Mammary epithelial cell (primary cell): ENCODE measurements at regions of chr17 and their contacts with region 1.

Region 1: DNA sequence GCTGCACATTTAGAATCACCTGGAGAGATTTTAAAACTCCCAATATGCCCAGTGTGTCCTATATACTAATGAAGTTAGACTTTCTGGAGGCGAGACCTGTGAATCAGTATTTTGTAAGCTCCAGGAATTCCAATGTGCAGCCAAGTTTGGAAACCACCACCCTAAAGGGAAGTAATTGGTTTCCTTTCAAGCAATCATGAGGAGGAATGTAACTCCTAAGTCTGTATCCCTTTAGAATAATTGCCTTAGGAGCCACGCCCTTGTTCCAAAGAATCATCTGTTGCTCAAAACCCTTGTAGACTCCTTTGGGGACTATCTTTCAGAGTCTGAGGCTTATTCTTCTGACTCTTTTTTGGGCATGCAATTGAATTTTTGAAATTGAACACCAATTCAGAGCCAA is 84.4 kb downstream of the DNAH9 start:
- DNase-seq: no peak
- H3K4me3 ChIP-seq: no peak overlapping the region
- H3K27ac ChIP-seq: no peak overlapping the region
- H3K4me1 ChIP-seq: no peaks in the 10 kb centered on the region
- H3K27me3 ChIP-seq: no peaks in the 10 kb centered on the region
- CTCF ChIP-seq: no peak

Region 2: DNA sequence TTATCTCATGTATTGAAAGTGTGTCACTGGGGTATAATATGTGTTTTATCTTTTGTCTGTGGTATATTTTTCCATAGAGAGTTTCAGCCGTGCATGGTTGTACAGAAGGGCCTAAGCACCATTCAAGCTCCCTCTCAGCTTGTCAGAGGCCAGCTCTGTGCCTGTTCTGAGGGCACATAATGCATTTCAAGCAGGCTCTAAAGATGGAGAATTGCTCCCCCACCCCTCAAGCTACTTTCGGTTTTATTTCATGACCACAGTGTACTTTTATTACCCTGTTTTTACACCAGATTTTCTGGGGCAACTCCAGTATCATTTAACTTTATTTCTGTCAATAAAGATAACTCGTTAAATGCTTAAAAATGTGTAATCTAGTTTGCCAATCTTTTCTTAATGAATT is 310.0 kb before region 1 on chr17:
- CTCF ChIA-PET with region 1: no interaction called
- dilution Hi-C with region 1: no loop called
- in situ Hi-C with region 1: no loop called
- intact Hi-C with region 1: no loop called
- DNase-seq: no peak
- H3K4me3 ChIP-seq: no peak overlapping the region
- H3K27ac ChIP-seq: no peak overlapping the region
- H3K4me1 ChIP-seq: no peaks in the 10 kb centered on the region
- H3K27me3 ChIP-seq: no peaks in the 10 kb centered on the region
- CTCF ChIP-seq: no peak

Region 3: DNA sequence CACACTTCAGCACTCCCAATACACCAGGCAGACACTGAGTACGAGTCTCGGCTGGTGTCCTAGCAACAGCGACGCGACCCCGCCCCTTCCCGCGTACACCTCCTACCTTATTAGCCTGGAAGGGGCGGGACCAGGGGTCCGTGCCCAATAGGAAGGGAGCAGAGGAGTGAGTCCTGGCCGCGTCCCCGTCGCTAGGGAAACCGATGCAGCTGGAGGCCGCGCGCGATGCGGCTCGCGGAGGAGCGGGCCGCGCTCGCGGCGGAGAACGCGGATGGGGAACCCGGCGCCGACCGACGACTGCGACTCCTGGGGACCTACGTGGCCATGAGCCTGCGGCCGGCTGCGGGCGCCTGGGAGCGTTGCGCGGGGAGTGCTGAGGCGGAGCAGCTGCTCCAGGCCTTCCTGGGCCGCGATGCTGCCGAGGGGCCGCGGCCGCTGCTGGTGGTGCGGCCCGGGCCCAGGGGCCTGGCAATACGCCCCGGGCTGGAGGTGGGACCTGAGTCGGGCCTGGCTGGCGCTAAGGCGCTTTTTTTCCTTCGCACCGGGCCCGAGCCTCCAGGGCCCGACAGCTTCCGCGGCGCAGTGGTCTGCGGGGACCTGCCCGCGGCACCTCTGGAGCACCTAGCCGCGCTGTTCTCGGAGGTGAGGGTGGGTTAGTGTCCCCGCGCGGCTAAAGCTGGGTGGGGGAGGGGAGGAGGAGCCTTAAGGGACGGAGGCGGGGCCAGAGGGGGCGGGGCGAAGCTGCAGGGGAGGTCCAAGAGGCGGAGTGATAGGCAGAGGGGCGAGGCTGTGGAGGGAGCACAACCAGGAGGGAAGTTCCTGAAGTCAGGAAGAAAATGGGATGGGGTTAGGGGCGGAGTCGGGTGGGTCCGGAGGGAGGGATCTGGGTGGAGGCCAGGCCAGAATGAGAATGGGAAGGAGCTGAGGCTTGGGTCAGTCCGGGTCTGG is 84.1 kb before region 1 on chr17 and contains the start of gene DNAH9:
- CTCF ChIA-PET with region 1: no interaction called
- dilution Hi-C with region 1: no loop called
- in situ Hi-C with region 1: loop called in 1 of 2 experiments (anchors 25 kb)
- intact Hi-C with region 1: no loop called
- DNase-seq: peak; percentile 17
- H3K4me3 ChIP-seq: no peak within 1 kb of the TSS
- H3K27ac ChIP-seq: no peak within 1 kb of the TSS
- H3K4me1 ChIP-seq: no peaks in the 10 kb centered on the region
- H3K27me3 ChIP-seq: no peaks in the 10 kb centered on the region
- CTCF ChIP-seq: no peak
- total RNA-seq, gene DNAH9: under 0.01 to 0.12 TPM